Vagina (tissue), 2 donors: ENCODE measurements at regions of chr4 and their contacts with region 1.

Region 1: GRCh38 chr4:90769251-90769650 is 642.1 kb downstream of the CCSER1 start:
- DNase-seq: no peak
- H3K4me3 ChIP-seq: no peak overlapping the region
- H3K27ac ChIP-seq: no peak overlapping the region
- H3K4me1 ChIP-seq: no peaks in the 10 kb centered on the region
- H3K27me3 ChIP-seq: no peaks in the 10 kb centered on the region
- CTCF ChIP-seq: no peak
- POLR2A ChIP-seq: no peak

Region 2: GRCh38 chr4:90799894-90800293 is 30.6 kb after region 1 on chr4:
- intact Hi-C with region 1: loop called (anchors 1 kb)
- DNase-seq: no peak
- H3K4me3 ChIP-seq: no peak overlapping the region
- H3K27ac ChIP-seq: no peak overlapping the region
- H3K4me1 ChIP-seq: no peaks in the 10 kb centered on the region
- H3K27me3 ChIP-seq: no peaks in the 10 kb centered on the region
- CTCF ChIP-seq: no peak
- POLR2A ChIP-seq: no peak

Region 3: GRCh38 chr4:90833706-90834105 is 64.5 kb after region 1 on chr4:
- intact Hi-C with region 1: no loop called
- DNase-seq: no peak
- H3K4me3 ChIP-seq: no peak overlapping the region
- H3K27ac ChIP-seq: no peak overlapping the region
- H3K4me1 ChIP-seq: no peaks in the 10 kb centered on the region
- H3K27me3 ChIP-seq: no peaks in the 10 kb centered on the region
- CTCF ChIP-seq: no peak
- POLR2A ChIP-seq: no peak

Region 4: GRCh38 chr4:91681544-91681943 is 912.3 kb after region 1 on chr4:
- intact Hi-C with region 1: no loop called
- DNase-seq: no peak
- H3K4me3 ChIP-seq: no peak overlapping the region
- H3K27ac ChIP-seq: no peak overlapping the region
- H3K4me1 ChIP-seq: no peaks in the 10 kb centered on the region
- H3K27me3 ChIP-seq: no peaks in the 10 kb centered on the region
- CTCF ChIP-seq: no peak
- POLR2A ChIP-seq: no peak